ENCODE measurements at regions of chr1 and their contacts with region 1.

Region 1: GRCh38 chr1:61056573-61057439 is 25.6 kb upstream of the NFIA start:
- DNase-seq: peak; percentile 53
- H3K4me3 ChIP-seq: peak overlapping the region; percentile 57 to 72 (median 72)
- H3K27ac ChIP-seq: peak overlapping the region; percentile 45
- H3K4me1 ChIP-seq: peaks cover 12% of the 10 kb centered on the region
- H3K27me3 ChIP-seq: no peaks in the 10 kb centered on the region
- CTCF ChIP-seq: no peak

Region 2: GRCh38 chr1:61141288-61142042 is 84.7 kb after region 1 on chr1:
- CTCF ChIA-PET with region 1: no interaction called
- dilution Hi-C with region 1: no loop called
- in situ Hi-C with region 1: no loop called
- intact Hi-C with region 1: loop called (anchors 1 kb)
- DNase-seq: peak; percentile 94
- H3K4me3 ChIP-seq: no peak overlapping the region
- H3K27ac ChIP-seq: peak overlapping the region; percentile 77
- H3K4me1 ChIP-seq: peaks cover 42% of the 10 kb centered on the region
- H3K27me3 ChIP-seq: no peaks in the 10 kb centered on the region
- CTCF ChIP-seq: no peak

Region 3: GRCh38 chr1:61226784-61227567 is 170.2 kb after region 1 on chr1:
- CTCF ChIA-PET with region 1: no interaction called
- dilution Hi-C with region 1: no loop called
- in situ Hi-C with region 1: no loop called
- intact Hi-C with region 1: no loop called
- DNase-seq: no peak
- H3K4me3 ChIP-seq: no peak overlapping the region
- H3K27ac ChIP-seq: no peak overlapping the region
- H3K4me1 ChIP-seq: no peaks in the 10 kb centered on the region
- H3K27me3 ChIP-seq: no peaks in the 10 kb centered on the region
- CTCF ChIP-seq: no peak